ENCODE measurements at regions of chr20 and their contacts with region 1.

Region 1: GRCh38 chr20:52494244-52494643 is 302.7 kb upstream of the ZFP64 start:
- DNase-seq: peak; percentile 98
- ATAC-seq: peak; percentile 86
- H3K4me3 ChIP-seq: no peak overlapping the region
- H3K27ac ChIP-seq: peak overlapping the region; percentile 1; the same call in 1 of the 2 replicates
- H3K4me1 ChIP-seq: peaks cover 11% of the 10 kb centered on the region
- H3K27me3 ChIP-seq: no peaks in the 10 kb centered on the region
- CTCF ChIP-seq: no peak
- POLR2A ChIP-seq: no peak; the same call in 1 of the 2 replicates
- RAD21 ChIP-seq: 0 out of 2 replicates have a peak, but pooled peaks have one; percentile 17

Region 2: DNA sequence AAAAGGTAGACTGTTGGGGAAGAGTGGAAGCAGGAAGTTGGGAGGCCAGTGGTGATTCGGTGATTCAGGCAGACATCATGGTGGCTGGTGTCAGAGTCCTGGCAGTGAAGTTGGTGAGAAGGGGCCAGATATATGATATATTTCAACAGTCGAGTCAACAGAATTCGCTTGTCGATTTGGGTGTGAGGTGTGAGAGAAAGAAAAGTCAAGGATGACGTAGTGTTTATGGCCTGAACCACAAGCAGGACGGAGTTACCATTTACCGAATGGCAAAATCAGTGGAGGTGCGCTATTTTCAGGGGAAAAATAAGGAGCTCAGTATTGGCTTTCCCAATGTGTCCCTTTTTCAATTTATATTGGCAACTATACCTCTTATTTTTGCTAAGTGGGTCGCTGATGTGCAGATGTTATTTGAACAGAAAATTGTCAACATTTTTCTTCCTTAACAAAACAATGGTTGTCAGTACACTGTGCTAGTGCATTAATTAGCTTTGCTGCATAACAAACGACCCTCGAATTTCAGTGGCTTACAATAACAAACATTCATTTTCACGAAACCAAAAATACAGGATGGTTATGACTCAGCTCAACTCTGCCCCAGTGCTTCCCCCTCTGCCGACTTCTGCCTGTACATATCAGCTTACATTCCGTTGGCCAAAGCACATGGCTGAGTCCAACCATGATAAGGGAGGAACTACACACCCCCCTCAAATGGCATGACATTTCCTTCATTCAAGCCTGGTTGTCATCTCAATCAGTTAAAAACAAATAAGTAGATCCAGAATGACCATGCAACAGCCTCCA is 47.6 kb before region 1 on chr20:
- CTCF ChIA-PET with region 1: no interaction called
- POLR2A ChIA-PET with region 1: no interaction called
- dilution Hi-C with region 1: no loop called
- in situ Hi-C with region 1: no loop called
- intact Hi-C with region 1: loop called (anchors 5 kb)
- DNase-seq: peak; percentile 66
- ATAC-seq: peak; percentile 85
- H3K4me3 ChIP-seq: no peak overlapping the region
- H3K27ac ChIP-seq: no peak overlapping the region
- H3K4me1 ChIP-seq: no peaks in the 10 kb centered on the region
- H3K27me3 ChIP-seq: no peaks in the 10 kb centered on the region; the same call in 1 of the 2 replicates
- CTCF ChIP-seq: no peak
- POLR2A ChIP-seq: no peak
- RAD21 ChIP-seq: no peak

Region 3: DNA sequence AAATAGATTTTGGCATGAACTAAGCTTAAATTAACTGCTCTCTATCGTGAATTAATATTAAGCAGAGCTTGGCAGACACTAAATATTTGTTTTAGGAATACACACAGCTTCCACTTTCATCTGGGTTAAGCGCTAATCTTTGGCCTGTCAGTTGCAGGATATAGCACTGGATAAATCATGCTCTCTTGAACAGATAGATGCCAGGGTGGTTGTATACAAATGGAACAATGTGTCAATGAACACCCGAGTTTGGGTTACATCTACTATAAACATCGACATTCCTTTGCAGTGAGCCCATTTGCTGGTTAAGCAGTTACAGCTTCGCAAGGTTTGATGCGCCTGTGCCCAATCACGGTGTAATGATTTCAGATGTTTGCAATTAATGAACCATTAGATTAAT is 35.6 kb after region 1 on chr20:
- CTCF ChIA-PET with region 1: no interaction called
- POLR2A ChIA-PET with region 1: no interaction called
- dilution Hi-C with region 1: no loop called
- in situ Hi-C with region 1: no loop called
- intact Hi-C with region 1: loop called (anchors 5 kb)
- DNase-seq: peak; percentile 85
- ATAC-seq: peak; percentile 88
- H3K4me3 ChIP-seq: no peak overlapping the region
- H3K27ac ChIP-seq: no peak overlapping the region
- H3K4me1 ChIP-seq: peaks cover 3% of the 10 kb centered on the region
- H3K27me3 ChIP-seq: no peaks in the 10 kb centered on the region
- CTCF ChIP-seq: no peak
- POLR2A ChIP-seq: no peak
- RAD21 ChIP-seq: no peak; the same call in 1 of the 2 replicates

Region 4: DNA sequence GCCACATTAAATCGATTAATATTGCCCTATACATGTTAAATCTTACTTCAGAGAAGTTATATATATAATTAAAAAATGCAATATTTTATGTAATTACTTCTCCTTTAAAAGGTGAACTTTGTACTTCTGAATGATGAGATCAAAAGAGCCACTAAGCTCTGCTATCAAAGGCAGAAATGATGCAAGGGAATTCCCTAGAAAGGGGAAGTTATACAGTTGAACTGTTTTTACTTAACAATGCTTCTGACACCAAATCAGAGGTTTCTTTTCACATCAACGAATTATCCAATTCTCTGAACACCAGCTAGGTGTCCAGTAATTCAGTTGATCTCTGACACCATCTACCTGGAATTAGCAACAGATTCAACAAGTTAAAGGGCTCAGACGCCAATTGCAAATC is 158.0 kb after region 1 on chr20:
- CTCF ChIA-PET with region 1: no interaction called
- POLR2A ChIA-PET with region 1: no interaction called
- dilution Hi-C with region 1: no loop called
- in situ Hi-C with region 1: no loop called
- intact Hi-C with region 1: no loop called
- DNase-seq: no peak
- ATAC-seq: no peak
- H3K4me3 ChIP-seq: no peak overlapping the region
- H3K27ac ChIP-seq: no peak overlapping the region
- H3K4me1 ChIP-seq: no peaks in the 10 kb centered on the region
- H3K27me3 ChIP-seq: no peaks in the 10 kb centered on the region
- CTCF ChIP-seq: no peak
- POLR2A ChIP-seq: no peak
- RAD21 ChIP-seq: no peak

Region 5: DNA sequence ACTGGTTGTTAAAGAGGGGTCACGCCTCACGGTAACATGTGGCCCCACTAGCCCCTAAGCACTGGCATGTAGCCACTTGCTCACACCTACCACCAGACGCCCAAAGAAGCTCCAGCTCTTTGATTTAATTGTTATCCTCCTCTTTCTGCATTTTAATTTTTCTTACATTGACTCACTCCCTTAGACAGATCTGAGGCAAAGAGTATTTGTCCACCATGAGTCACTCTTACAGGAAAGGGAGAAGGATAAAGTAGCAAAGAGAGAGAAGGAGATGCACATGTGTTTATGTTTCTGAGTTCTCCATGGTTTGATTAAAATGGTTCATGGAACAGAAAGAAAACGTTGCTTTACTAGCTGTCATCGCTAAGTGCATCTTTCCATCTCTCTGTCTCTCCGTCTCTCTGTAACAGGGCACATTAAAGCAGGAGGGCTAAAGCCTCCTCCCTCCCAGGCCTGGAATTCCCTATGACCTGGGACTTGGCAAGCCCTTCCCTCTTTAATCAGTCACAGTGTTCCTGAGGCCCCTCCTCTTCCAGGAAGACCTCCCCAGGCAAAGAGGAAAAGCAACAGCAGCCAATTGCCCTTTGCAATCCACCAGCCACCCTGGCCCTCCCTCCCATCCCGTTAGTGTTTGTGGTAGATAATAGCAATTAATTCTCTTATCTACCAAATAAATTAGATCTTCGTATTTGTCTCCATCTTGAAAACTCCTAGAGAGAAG is 365.1 kb after region 1 on chr20:
- CTCF ChIA-PET with region 1: no interaction called
- POLR2A ChIA-PET with region 1: no interaction called
- dilution Hi-C with region 1: no loop called
- in situ Hi-C with region 1: no loop called
- intact Hi-C with region 1: no loop called
- DNase-seq: no peak
- ATAC-seq: no peak
- H3K4me3 ChIP-seq: no peak overlapping the region
- H3K27ac ChIP-seq: no peak overlapping the region
- H3K4me1 ChIP-seq: no peaks in the 10 kb centered on the region
- H3K27me3 ChIP-seq: no peaks in the 10 kb centered on the region
- CTCF ChIP-seq: no peak
- POLR2A ChIP-seq: no peak
- RAD21 ChIP-seq: no peak

Region 6: GRCh38 chr20:53939572-53940359 is 1445.5 kb after region 1 on chr20:
- CTCF ChIA-PET with region 1: no interaction called
- POLR2A ChIA-PET with region 1: no interaction called
- dilution Hi-C with region 1: no loop called
- in situ Hi-C with region 1: loop called (anchors 25 kb)
- intact Hi-C with region 1: no loop called
- DNase-seq: peak; percentile 94
- ATAC-seq: peak; percentile 89
- H3K4me3 ChIP-seq: no peak overlapping the region
- H3K27ac ChIP-seq: peak overlapping the region; percentile 66
- H3K4me1 ChIP-seq: peaks cover 16% of the 10 kb centered on the region
- H3K27me3 ChIP-seq: no peaks in the 10 kb centered on the region
- CTCF ChIP-seq: peak; percentile 92
- POLR2A ChIP-seq: 0 out of 2 replicates have a peak, but pooled peaks have one; percentile 61
- RAD21 ChIP-seq: peak; percentile 95

Measured in IMR-90 (cell line).